Activated T-helper 1 cell treated with anti-CD3 and anti-CD28 coated beads, Interleukin-12 subunit alpha, Interleukin-12 subunit beta, Interleukin-2, Interleukin-4 antibody, amounts not matched to agents 30 ng/mL and 10 ng/mL and 1 ng/mL, durations not matched to agents 14 hours and 24 hours and 36 hours (primary cell): ENCODE measurements at regions of chr4 and their contacts with region 1.

Region 1: GRCh38 chr4:145180298-145181090 is at the start of gene OTUD4:
- DNase-seq: peak; percentile 95
- H3K4me3 Mint-ChIP-seq: peak within 1 kb of the TSS; percentile 99
- H3K27ac Mint-ChIP-seq: peak within 1 kb of the TSS; percentile 99
- H3K4me1 Mint-ChIP-seq: peaks cover 29% of the 10 kb centered on the region
- H3K27me3 Mint-ChIP-seq: peaks cover 2% of the 10 kb centered on the region
- total RNA-seq, gene OTUD4: 76.9 and 80.9 TPM in 2 replicates

Region 2: DNA sequence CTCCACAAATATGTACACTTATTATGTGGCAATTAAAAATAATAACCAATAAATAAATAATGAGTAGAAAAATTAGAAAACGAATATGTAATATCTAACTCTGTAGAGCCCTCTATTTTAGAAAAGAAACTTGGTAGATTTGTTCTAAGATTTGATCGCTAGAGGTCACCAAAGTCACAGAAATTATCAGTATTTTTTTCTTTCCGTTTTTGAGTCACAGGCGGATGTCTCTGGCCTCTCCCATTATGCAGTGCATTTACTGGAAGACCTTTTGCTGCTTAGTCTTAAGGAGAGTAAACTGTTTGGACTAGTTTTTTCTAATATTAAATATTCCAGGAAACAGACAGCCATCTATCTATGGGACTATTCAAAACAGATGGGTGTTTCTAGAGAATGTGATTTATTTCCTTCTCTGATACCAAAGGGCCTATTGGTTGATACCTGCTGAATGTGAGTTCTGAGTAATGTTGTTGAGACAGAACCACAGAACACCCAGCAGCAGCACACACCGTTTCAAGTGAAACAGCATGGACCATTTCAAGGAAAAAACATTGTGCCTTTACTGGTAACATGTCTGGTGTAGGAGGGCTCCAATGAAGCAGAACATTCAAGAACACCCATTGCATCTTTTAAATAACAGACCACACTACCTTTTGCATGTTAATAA is 1006.0 kb before region 1 on chr4:
- intact Hi-C with region 1: loop called (anchors 1 kb)
- DNase-seq: peak; percentile 19
- H3K4me3 Mint-ChIP-seq: peak overlapping the region; percentile 40
- H3K27ac Mint-ChIP-seq: peak overlapping the region; percentile 70
- H3K4me1 Mint-ChIP-seq: peaks cover 37% of the 10 kb centered on the region
- H3K27me3 Mint-ChIP-seq: peaks cover 4% of the 10 kb centered on the region

Region 3: DNA sequence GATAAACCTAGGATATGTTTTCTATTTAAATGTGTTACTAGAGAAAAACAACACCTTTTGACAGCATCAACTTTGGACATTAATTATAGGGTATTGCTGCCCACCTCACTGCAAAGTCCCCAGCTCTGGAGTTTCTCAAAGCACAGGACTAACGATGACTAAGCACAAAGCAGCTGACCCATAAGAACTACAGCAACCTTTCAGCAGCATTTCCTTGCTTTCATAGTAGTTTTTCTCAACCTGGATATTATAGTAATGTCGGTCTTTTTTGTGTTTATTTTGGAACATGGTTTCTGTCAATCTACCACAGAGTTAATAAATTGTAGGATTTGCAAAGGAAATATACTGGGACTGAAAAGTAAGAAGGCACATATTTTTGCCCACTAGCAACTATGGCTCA is 513.0 kb before region 1 on chr4:
- intact Hi-C with region 1: no loop called
- DNase-seq: no peak
- H3K4me3 Mint-ChIP-seq: no peak overlapping the region
- H3K27ac Mint-ChIP-seq: no peak overlapping the region
- H3K4me1 Mint-ChIP-seq: no peaks in the 10 kb centered on the region
- H3K27me3 Mint-ChIP-seq: no peaks in the 10 kb centered on the region

Region 4: DNA sequence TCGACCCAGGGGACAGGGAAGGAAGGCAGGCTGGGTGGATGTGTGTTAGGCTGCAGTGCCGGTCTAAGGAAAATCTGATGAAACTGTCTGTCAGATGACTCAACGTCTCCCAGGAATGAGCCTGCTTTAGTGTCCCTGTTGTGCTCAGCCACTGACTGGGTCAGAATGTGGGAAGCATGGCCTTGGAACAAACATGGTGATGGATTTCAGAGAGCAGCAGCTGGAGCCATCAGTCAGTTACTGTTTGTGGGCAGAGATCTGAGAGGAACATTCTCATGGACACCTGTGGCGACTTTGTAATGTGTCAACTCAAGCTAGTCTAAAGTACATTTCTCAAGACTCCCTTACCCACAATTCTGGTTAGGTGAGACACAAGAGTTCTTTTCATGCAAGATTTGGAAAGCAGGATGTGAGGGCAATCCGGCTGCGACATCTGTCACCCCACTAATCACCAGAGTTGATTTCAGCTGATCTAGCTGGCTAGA is 145.7 kb before region 1 on chr4:
- intact Hi-C with region 1: no loop called
- DNase-seq: no peak
- H3K4me3 Mint-ChIP-seq: no peak overlapping the region
- H3K27ac Mint-ChIP-seq: no peak overlapping the region
- H3K4me1 Mint-ChIP-seq: peaks cover 13% of the 10 kb centered on the region
- H3K27me3 Mint-ChIP-seq: no peaks in the 10 kb centered on the region

Region 5: GRCh38 chr4:145170223-145170622 is 10.3 kb before region 1 on chr4:
- intact Hi-C with region 1: loop called (anchors 2 kb)
- DNase-seq: no peak
- H3K4me3 Mint-ChIP-seq: no peak overlapping the region
- H3K27ac Mint-ChIP-seq: no peak overlapping the region
- H3K4me1 Mint-ChIP-seq: peaks cover 49% of the 10 kb centered on the region
- H3K27me3 Mint-ChIP-seq: no peaks in the 10 kb centered on the region

Region 6: GRCh38 chr4:145388043-145388442 is 207.5 kb after region 1 on chr4:
- intact Hi-C with region 1: no loop called
- DNase-seq: no peak
- H3K4me3 Mint-ChIP-seq: no peak overlapping the region
- H3K27ac Mint-ChIP-seq: no peak overlapping the region
- H3K4me1 Mint-ChIP-seq: no peaks in the 10 kb centered on the region
- H3K27me3 Mint-ChIP-seq: no peaks in the 10 kb centered on the region

Region 7: DNA sequence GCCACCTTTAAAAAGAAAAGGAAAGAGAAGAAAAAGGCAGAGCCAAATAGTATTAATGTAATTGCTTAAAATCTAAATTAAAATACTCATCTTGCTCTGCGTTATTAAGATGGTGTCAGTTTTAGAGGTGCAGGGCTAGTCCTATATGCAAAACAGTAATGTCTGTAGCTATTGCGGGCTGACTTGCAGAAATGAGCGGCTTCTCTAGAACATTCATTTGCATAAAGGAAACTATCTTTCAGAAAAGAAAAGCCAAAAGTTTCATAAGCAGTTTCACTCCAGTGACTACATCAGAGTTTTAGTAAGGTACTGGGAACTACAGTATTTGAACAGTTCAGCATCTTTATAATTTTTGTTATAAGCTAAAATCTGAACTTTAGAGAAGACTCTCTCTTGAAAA is 307.1 kb after region 1 on chr4:
- intact Hi-C with region 1: loop called (anchors 1 kb)
- DNase-seq: no peak
- H3K4me3 Mint-ChIP-seq: no peak overlapping the region
- H3K27ac Mint-ChIP-seq: no peak overlapping the region
- H3K4me1 Mint-ChIP-seq: peaks cover 10% of the 10 kb centered on the region
- H3K27me3 Mint-ChIP-seq: peaks cover 23% of the 10 kb centered on the region

Region 8: GRCh38 chr4:145732895-145733880 is 552.7 kb after region 1 on chr4:
- intact Hi-C with region 1: loop called (anchors 1 kb)
- DNase-seq: peak; percentile 82
- H3K4me3 Mint-ChIP-seq: peak overlapping the region; percentile 79
- H3K27ac Mint-ChIP-seq: peak overlapping the region; percentile 24
- H3K4me1 Mint-ChIP-seq: peaks cover 10% of the 10 kb centered on the region
- H3K27me3 Mint-ChIP-seq: peaks cover 3% of the 10 kb centered on the region

Region 9: GRCh38 chr4:145936142-145936996 is 755.9 kb after region 1 on chr4:
- intact Hi-C with region 1: loop called (anchors 1 kb)
- DNase-seq: peak; percentile 41
- H3K4me3 Mint-ChIP-seq: peak overlapping the region; percentile 95
- H3K27ac Mint-ChIP-seq: peak overlapping the region; percentile 96
- H3K4me1 Mint-ChIP-seq: peaks cover 48% of the 10 kb centered on the region
- H3K27me3 Mint-ChIP-seq: peaks cover 3% of the 10 kb centered on the region

Region 10: DNA sequence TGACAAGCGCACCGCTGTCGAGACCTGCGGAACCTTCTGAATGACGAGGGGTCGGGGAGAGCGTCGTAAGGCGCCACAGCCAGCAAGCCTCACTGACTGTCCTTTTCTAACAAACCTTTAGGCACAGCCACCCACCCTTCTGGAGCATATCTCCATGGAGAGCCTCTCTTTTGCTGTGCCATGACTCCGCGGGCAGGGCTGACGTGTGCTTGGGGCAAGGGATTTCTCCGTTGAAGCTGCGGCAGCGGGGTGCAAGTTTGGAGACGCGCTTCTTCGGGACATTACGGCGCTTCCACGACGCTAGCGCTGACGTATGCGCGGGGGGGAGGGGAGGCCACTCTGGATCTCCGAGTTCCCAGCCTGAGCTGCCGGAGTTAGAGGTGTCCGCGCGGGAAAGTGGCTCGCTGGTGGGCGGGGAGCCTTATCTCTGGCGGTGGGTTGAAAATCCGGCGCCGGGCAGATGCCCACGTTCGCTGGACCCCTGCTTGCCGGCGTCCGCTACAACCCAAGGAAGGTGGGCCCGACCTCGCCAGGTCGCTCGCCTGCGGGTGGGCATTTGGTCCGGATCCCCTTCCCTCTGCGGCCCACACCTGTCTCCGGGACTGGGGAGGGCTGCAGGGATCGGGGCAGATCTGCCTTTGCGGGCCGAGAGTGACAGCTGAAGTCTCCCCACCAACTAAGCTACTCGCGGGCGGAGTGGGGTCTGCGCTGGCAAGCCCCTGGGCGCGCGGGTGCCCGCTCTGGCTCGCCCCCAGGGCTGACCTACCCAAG is 1341.8 kb after region 1 on chr4:
- intact Hi-C with region 1: loop called (anchors 5 kb)
- DNase-seq: peak; percentile 79
- H3K4me3 Mint-ChIP-seq: no peak overlapping the region
- H3K27ac Mint-ChIP-seq: no peak overlapping the region
- H3K4me1 Mint-ChIP-seq: peaks cover 31% of the 10 kb centered on the region
- H3K27me3 Mint-ChIP-seq: no peaks in the 10 kb centered on the region